ENCODE measurements at regions of chr5 and their contacts with region 1.

Region 1: DNA sequence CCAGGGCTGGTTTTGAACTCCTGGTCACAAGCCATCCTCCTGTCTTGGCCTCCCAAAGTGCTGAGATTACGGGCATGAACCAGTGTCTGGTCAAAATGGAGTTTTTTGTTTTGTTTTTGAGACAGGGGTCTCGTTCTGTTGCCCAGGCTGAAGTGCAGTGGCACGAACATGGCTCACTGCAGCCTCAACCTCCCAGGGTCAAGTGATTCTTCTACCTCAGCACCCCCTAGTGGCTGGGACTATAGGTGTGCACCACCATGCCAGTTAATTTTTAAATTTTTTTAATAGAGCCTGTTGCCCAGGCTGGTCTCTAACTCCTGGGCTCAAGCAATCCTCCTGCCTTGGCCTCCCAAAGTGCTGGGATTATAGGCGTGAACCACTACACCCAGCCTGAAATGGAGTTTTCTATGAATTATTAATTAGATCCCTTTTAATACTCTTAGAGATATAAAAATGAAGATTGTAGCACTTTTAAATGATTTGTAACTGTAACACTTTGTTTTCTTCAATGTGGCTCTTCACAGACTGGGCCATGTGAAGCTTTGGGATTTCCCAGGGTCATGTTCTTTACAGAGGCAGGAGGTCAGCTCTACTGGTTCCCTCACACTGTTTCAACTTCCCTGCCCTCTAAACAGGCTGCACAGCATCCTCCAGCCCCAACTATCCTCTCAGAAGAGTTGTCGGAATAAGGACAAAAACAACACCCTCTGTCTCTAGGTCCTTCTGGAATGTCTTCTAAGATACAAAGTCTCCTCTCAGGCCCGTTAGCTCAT is 32.7 kb upstream of the SPARC start:
- DNase-seq: peak in 2 of 10 donors; percentile 27 to 44
- H3K4me3 ChIP-seq: no peak overlapping the region
- H3K27ac ChIP-seq: no peak overlapping the region
- H3K27me3 ChIP-seq: no peaks in the 10 kb centered on the region
- CTCF ChIP-seq: peak; percentile 38 to 78 (median 64)

Region 2: GRCh38 chr5:151406322-151406947 is 313.0 kb before region 1 on chr5:
- intact Hi-C with region 1: no loop called
- DNase-seq: no peak
- H3K4me3 ChIP-seq: peak overlapping the region in 1 of 59 donors; percentile 27
- H3K27ac ChIP-seq: no peak overlapping the region
- H3K27me3 ChIP-seq: peaks cover 0 to 5% (median 0%) of the 10 kb centered on the region in 45 donors
- CTCF ChIP-seq: peak in 39 of 56 donors; percentile 8 to 46 (median 29)

Region 3: GRCh38 chr5:151700820-151701219 is 18.6 kb before region 1 on chr5:
- intact Hi-C with region 1: loop called in 1 of 2 experiments (anchors 2 kb)
- DNase-seq: no peak
- H3K4me3 ChIP-seq: no peak overlapping the region
- H3K27ac ChIP-seq: no peak overlapping the region
- H3K27me3 ChIP-seq: no peaks in the 10 kb centered on the region
- CTCF ChIP-seq: no peak

Region 4: GRCh38 chr5:151811593-151812321 is 92.3 kb after region 1 on chr5:
- intact Hi-C with region 1: no loop called
- DNase-seq: no peak
- H3K4me3 ChIP-seq: no peak overlapping the region
- H3K27ac ChIP-seq: peak overlapping the region in 2 of 59 donors; percentile 17 to 27
- H3K27me3 ChIP-seq: no peaks in the 10 kb centered on the region
- CTCF ChIP-seq: no peak

Measured in dorsolateral prefrontal cortex (tissue), 120 donors.